CD8-positive, alpha-beta T cell (primary cell): ENCODE measurements at regions of chr9 and their contacts with region 1.

Region 1: GRCh38 chr9:111896353-111896958 is at the start of gene UGCG:
- DNase-seq: peak; percentile 69 to 93 (median 84)
- ATAC-seq: peak; percentile 94
- H3K4me3 ChIP-seq: peak within 1 kb of the TSS; percentile 79 to 94
- H3K4me3 Mint-ChIP-seq: peak within 1 kb of the TSS; percentile 95
- H3K27ac ChIP-seq: peak within 1 kb of the TSS; percentile 62 to 71
- H3K27ac Mint-ChIP-seq: peak within 1 kb of the TSS; percentile 94
- H3K4me1 ChIP-seq: peaks cover 41% of the 10 kb centered on the region
- H3K4me1 Mint-ChIP-seq: peaks cover 19% of the 10 kb centered on the region
- H3K27me3 ChIP-seq: no peaks in the 10 kb centered on the region
- H3K27me3 Mint-ChIP-seq: no peaks in the 10 kb centered on the region
- CTCF ChIP-seq: no peak
- total RNA-seq, gene UGCG: 34.0 to 35.5 TPM

Region 2: DNA sequence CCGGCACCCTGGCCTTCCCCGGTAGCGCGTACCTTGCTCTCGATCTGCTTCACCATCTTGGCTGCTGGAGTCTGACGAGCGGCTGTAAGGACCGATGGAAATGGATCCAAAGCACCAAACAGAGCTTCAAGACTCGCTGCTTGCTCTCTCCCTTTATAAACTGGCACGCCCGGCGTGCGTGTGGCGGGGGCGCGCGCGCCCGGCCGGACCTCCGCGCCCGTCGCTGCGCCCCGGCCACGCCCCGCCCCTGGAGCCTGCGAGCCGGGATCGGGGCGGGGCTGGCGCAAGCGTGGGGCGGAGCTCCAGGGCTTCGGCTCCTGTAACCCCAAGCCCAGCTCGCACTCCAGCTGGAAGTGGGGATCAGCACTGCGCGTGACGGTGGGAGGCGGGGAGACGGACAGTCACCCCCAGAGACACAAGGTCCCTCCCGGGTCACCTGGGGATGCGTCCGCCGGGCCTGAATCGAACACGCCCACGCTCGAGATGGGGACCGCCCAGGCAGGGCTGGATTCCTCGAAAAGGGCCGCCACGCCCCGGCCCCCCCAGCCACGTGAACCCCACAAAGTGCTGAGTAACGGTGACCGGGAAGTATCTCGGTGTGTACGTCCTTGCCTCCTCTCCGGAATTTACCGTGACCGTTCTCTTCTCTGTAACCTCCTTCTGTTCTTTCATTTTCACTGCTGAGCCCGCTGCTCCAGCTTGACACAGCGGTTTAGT is 1639.9 kb before region 1 on chr9 and contains the start of gene TXN:
- CTCF ChIA-PET with region 1: no interaction called
- POLR2A ChIA-PET with region 1: no interaction called
- intact Hi-C with region 1: loop called in 1 of 2 experiments (anchors 5 kb)
- DNase-seq: peak; percentile 60 to 89 (median 78)
- ATAC-seq: peak; percentile 79
- H3K4me3 ChIP-seq: peak within 1 kb of the TSS; percentile 81 to 88
- H3K4me3 Mint-ChIP-seq: peak within 1 kb of the TSS; percentile 96
- H3K27ac ChIP-seq: peak within 1 kb of the TSS; percentile 55 to 68
- H3K27ac Mint-ChIP-seq: peak within 1 kb of the TSS; percentile 86
- H3K4me1 ChIP-seq: peaks cover 4% of the 10 kb centered on the region
- H3K4me1 Mint-ChIP-seq: peaks cover 36% of the 10 kb centered on the region
- H3K27me3 ChIP-seq: no peaks in the 10 kb centered on the region
- H3K27me3 Mint-ChIP-seq: no peaks in the 10 kb centered on the region
- CTCF ChIP-seq: no peak
- total RNA-seq, gene TXN: 16.0 to 18.0 TPM

Region 3: DNA sequence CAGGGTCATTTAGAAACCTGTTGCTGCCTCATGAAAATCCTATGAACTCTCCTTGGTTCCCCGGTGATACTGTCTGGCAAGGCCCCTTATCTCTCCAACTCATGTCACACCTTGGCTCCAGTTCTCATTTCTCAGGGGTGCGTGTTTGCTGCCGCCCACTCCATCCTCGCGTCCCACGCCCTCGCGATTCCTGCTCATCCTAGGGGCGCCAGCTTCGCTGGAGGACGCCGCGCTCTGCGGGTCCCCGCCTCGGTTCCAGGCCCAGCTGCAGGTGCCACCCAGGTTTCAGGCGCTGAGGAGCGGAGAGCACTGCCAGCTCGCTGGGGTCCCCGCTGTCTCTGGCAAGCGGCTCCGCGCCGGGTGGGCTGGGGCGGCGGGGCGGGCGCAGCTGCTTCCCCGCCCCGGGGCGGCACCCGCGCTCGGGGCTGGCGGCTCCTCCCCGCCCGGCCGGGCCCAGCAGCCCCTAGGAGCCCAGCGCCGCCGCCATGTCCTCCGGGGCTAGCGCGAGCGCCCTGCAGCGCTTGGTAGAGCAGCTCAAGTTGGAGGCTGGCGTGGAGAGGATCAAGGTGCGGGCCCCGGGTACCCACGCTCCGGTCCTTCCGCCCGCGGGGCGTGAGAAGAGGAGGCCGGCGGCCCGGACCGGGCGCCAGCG is 235.2 kb before region 1 on chr9 and contains the start of gene GNG10:
- CTCF ChIA-PET with region 1: no interaction called
- POLR2A ChIA-PET with region 1: no interaction called
- intact Hi-C with region 1: loop called (anchors 5 kb)
- DNase-seq: peak; percentile 48 to 82 (median 66)
- ATAC-seq: peak; percentile 95
- H3K4me3 ChIP-seq: peak within 1 kb of the TSS; percentile 70 to 95
- H3K4me3 Mint-ChIP-seq: peak within 1 kb of the TSS; percentile 95
- H3K27ac ChIP-seq: peak within 1 kb of the TSS; percentile 55 to 57
- H3K27ac Mint-ChIP-seq: peak within 1 kb of the TSS; percentile 92
- H3K4me1 ChIP-seq: peaks cover 24% of the 10 kb centered on the region
- H3K4me1 Mint-ChIP-seq: peaks cover 40% of the 10 kb centered on the region
- H3K27me3 ChIP-seq: no peaks in the 10 kb centered on the region
- H3K27me3 Mint-ChIP-seq: no peaks in the 10 kb centered on the region
- CTCF ChIP-seq: no peak
- total RNA-seq, gene GNG10: 1.6 to 2.6 TPM

Region 4: GRCh38 chr9:112037281-112038016 is 141.0 kb after region 1 on chr9:
- CTCF ChIA-PET with region 1: no interaction called
- POLR2A ChIA-PET with region 1: interaction called, 7 read pairs
- intact Hi-C with region 1: loop called (anchors 1 to 2 kb)
- DNase-seq: peak; percentile 29 to 88 (median 70)
- ATAC-seq: peak; percentile 96
- H3K4me3 ChIP-seq: no peak overlapping the region
- H3K4me3 Mint-ChIP-seq: peak overlapping the region; percentile 68
- H3K27ac ChIP-seq: peak overlapping the region in 1 of 2 experiments; percentile 4
- H3K27ac Mint-ChIP-seq: peak overlapping the region; percentile 87
- H3K4me1 ChIP-seq: peaks cover 30% of the 10 kb centered on the region
- H3K4me1 Mint-ChIP-seq: peaks cover 59% of the 10 kb centered on the region
- H3K27me3 ChIP-seq: no peaks in the 10 kb centered on the region
- H3K27me3 Mint-ChIP-seq: peaks cover 17% of the 10 kb centered on the region
- CTCF ChIP-seq: no peak

Region 5: DNA sequence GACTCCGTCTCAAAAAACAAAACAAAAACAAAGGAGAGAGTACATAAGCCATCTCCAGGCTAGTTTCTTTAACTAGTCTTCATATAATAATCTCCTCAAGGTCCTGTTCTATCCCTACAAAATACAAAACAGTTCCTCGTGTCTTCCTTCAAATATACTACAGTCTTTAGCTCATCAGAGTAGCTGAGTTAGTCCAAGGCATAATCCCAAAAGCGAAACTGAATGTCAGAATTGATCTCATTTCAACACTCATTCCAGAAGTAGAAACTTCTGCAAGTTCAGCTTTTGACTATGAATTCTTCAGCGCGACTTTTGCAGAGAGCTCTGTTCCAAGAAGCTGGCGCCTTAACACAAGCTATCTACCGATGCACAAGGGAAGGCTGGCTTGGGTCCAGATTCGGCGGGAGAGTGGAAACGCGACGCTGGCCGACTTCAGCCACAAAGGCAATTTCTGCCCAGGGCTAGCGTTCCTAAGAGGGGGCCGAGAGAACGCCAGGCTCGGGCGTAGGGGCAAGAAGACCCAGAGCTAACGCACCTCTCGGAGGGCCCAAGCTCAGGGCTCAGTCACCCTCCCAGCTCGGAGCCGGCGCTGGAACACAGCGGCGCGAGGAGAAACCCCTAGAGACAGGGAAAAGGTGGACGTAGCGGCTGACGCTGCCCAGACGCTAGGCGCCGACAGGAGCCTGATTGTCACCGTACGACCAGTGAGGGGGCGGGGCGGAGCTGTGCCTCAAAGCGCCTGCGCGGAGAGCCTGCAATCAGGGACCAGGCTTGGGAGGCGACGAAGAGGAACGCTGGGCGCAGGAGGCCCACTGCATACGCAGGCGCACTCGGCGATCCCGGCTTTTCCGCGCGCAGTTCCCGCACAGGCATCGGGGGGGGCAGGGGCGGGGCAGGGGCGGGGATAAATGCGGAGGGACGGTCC is 483.0 kb after region 1 on chr9:
- CTCF ChIA-PET with region 1: no interaction called
- POLR2A ChIA-PET with region 1: no interaction called
- intact Hi-C with region 1: loop called (anchors 1 to 5 kb)
- DNase-seq: peak; percentile 93 to 99 (median 97)
- ATAC-seq: peak; percentile 95
- H3K4me3 ChIP-seq: peak overlapping the region; percentile 81 to 96
- H3K4me3 Mint-ChIP-seq: peak overlapping the region; percentile 99
- H3K27ac ChIP-seq: peak overlapping the region; percentile 77 to 92
- H3K27ac Mint-ChIP-seq: peak overlapping the region; percentile 96
- H3K4me1 ChIP-seq: peaks cover 27% of the 10 kb centered on the region
- H3K4me1 Mint-ChIP-seq: peaks cover 54% of the 10 kb centered on the region
- H3K27me3 ChIP-seq: no peaks in the 10 kb centered on the region
- H3K27me3 Mint-ChIP-seq: no peaks in the 10 kb centered on the region
- CTCF ChIP-seq: no peak

Region 6: GRCh38 chr9:112496074-112496722 is 599.7 kb after region 1 on chr9:
- CTCF ChIA-PET with region 1: no interaction called
- POLR2A ChIA-PET with region 1: no interaction called
- intact Hi-C with region 1: no loop called
- DNase-seq: no peak
- ATAC-seq: no peak
- H3K4me3 ChIP-seq: no peak overlapping the region
- H3K4me3 Mint-ChIP-seq: no peak overlapping the region
- H3K27ac ChIP-seq: no peak overlapping the region
- H3K27ac Mint-ChIP-seq: no peak overlapping the region
- H3K4me1 ChIP-seq: no peaks in the 10 kb centered on the region
- H3K4me1 Mint-ChIP-seq: peaks cover 7% of the 10 kb centered on the region
- H3K27me3 ChIP-seq: no peaks in the 10 kb centered on the region
- H3K27me3 Mint-ChIP-seq: no peaks in the 10 kb centered on the region
- CTCF ChIP-seq: no peak

Region 7: GRCh38 chr9:112750111-112750767 is 853.8 kb after region 1 on chr9 and contains the start of gene SNX30:
- CTCF ChIA-PET with region 1: no interaction called
- POLR2A ChIA-PET with region 1: no interaction called
- intact Hi-C with region 1: loop called (anchors 10 kb)
- DNase-seq: peak; percentile 42 to 91 (median 78)
- ATAC-seq: peak; percentile 67
- H3K4me3 ChIP-seq: peak within 1 kb of the TSS; percentile 66 to 72
- H3K4me3 Mint-ChIP-seq: peak within 1 kb of the TSS; percentile 91
- H3K27ac ChIP-seq: peak within 1 kb of the TSS; percentile 44 to 83
- H3K27ac Mint-ChIP-seq: peak within 1 kb of the TSS; percentile 94
- H3K4me1 ChIP-seq: peaks cover 47% of the 10 kb centered on the region
- H3K4me1 Mint-ChIP-seq: peaks cover 64% of the 10 kb centered on the region
- H3K27me3 ChIP-seq: no peaks in the 10 kb centered on the region
- H3K27me3 Mint-ChIP-seq: no peaks in the 10 kb centered on the region
- CTCF ChIP-seq: no peak
- total RNA-seq, gene SNX30: 6.0 to 8.1 TPM